Activated CD8-positive, alpha-beta T cell treated with anti-CD3 and anti-CD28 coated beads for 36 hours (primary cell): ENCODE measurements at regions of chr1 and their contacts with region 1.

Region 1: GRCh38 chr1:40338745-40339424 is 21.8 kb upstream of the COL9A2 start:
- DNase-seq: peak; percentile 96
- ATAC-seq: peak; percentile 92
- H3K4me3 Mint-ChIP-seq: no peak overlapping the region
- H3K27ac Mint-ChIP-seq: peak overlapping the region; percentile 9
- H3K4me1 Mint-ChIP-seq: peaks cover 41% of the 10 kb centered on the region
- H3K27me3 Mint-ChIP-seq: no peaks in the 10 kb centered on the region
- CTCF ChIP-seq: peak; percentile 96

Region 2: DNA sequence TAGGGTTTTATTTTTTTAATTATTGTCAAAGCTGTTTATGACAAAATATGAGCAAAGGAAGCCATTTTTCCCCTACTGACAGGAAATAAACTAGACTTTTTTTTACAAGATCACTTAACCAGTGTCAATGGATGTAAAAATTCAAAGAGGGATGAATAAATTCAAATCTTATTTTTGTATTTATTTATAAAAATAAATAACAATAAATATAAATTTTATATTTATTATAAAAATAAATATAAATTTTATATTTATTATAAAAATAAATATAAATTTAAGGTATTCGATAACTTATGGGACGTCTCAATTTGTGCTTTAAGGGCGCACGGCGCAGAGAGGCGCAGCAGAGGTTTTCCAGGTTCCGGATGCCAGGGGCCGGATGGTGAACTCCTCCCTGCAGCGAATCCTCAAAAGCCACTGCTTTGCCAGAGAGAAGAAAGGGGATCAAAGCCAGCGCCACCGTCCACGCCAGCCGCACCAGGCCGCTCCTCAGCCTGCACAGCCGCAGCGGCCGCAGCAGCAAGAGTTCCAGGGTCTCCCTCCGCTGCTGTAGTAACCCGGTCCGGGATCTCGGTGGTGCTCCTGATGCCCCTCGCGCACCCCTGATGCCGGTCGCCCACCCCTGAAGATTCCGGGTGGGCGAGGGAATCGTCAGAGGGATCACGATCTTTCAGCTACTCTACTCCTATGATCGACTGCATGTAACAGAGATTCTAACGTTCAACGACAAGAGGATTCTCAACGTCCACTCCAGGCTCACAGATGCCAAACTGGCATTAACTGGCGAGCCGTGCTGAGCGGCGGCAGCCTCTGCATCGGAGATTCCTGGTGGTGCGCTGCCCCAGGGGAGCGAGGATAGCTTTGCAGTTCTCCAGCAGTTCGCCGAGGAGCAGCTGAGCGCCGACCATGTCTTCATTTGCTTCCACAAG is 206.2 kb before region 1 on chr1:
- CTCF ChIA-PET with region 1: interaction called, 15 read pairs
- POLR2A ChIA-PET with region 1: no interaction called
- intact Hi-C with region 1: no loop called
- DNase-seq: no peak
- ATAC-seq: no peak
- H3K4me3 Mint-ChIP-seq: no peak overlapping the region
- H3K27ac Mint-ChIP-seq: no peak overlapping the region
- H3K4me1 Mint-ChIP-seq: no peaks in the 10 kb centered on the region
- H3K27me3 Mint-ChIP-seq: peaks cover 6% of the 10 kb centered on the region
- CTCF ChIP-seq: no peak

Region 3: DNA sequence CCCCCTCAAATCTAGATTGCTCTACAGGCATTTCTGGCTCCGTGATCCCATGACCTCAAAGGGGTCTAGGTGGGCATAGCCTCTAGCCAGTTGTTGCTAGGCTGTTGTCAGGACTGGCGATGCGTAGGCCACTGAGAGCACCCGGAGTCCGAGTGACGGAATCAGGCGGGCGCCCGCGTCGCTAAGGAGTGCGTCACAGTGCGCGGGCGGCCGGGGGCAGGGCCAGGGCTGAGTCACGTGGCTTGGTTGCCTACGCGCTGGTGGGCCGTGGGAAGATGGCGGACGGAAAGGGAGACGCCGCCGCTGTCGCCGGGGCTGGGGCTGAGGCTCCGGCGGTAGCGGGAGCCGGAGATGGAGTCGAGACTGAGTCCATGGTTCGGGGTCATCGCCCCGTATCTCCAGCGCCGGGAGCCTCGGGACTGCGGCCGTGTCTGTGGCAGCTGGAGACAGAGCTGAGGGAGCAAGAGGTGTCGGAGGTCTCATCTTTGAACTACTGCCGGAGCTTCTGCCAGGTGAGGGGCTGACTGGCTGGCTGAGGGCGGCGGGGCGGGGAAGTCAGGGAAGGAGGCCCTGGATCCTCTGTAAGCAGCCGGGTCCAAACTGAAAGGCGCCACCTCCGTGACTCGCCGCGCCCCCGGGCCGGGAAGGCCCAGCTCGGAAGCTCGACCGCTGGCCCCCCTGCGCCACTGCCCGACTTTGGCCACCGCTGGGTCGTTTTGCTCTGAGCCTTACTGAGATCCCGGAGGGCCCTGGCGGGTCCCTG is 177.6 kb before region 1 on chr1 and contains the start of gene RLF:
- CTCF ChIA-PET with region 1: interaction called, 331 read pairs
- POLR2A ChIA-PET with region 1: interaction called, 4 read pairs
- intact Hi-C with region 1: no loop called
- DNase-seq: peak; percentile 97
- ATAC-seq: peak; percentile 90
- H3K4me3 Mint-ChIP-seq: no peak within 1 kb of the TSS
- H3K27ac Mint-ChIP-seq: no peak within 1 kb of the TSS
- H3K4me1 Mint-ChIP-seq: peaks cover 5% of the 10 kb centered on the region
- H3K27me3 Mint-ChIP-seq: no peaks in the 10 kb centered on the region
- CTCF ChIP-seq: no peak
- total RNA-seq, gene RLF: 21.2 to 21.3 TPM

Region 4: GRCh38 chr1:40291293-40291692 is 47.6 kb before region 1 on chr1:
- CTCF ChIA-PET with region 1: interaction called, 14 read pairs
- POLR2A ChIA-PET with region 1: no interaction called
- intact Hi-C with region 1: no loop called
- DNase-seq: no peak
- ATAC-seq: no peak
- H3K4me3 Mint-ChIP-seq: no peak overlapping the region
- H3K27ac Mint-ChIP-seq: peak overlapping the region; percentile 68
- H3K4me1 Mint-ChIP-seq: peaks cover 7% of the 10 kb centered on the region
- H3K27me3 Mint-ChIP-seq: no peaks in the 10 kb centered on the region
- CTCF ChIP-seq: no peak

Region 5: GRCh38 chr1:40363721-40364120 is 24.8 kb after region 1 on chr1:
- CTCF ChIA-PET with region 1: interaction called, 26 read pairs
- POLR2A ChIA-PET with region 1: no interaction called
- intact Hi-C with region 1: no loop called
- DNase-seq: peak; percentile 68
- ATAC-seq: peak; percentile 99
- H3K4me3 Mint-ChIP-seq: no peak overlapping the region
- H3K27ac Mint-ChIP-seq: no peak overlapping the region
- H3K4me1 Mint-ChIP-seq: peaks cover 13% of the 10 kb centered on the region
- H3K27me3 Mint-ChIP-seq: no peaks in the 10 kb centered on the region
- CTCF ChIP-seq: peak; percentile 32

Region 6: GRCh38 chr1:40404670-40405462 is 66.0 kb after region 1 on chr1:
- CTCF ChIA-PET with region 1: interaction called, 56 read pairs
- POLR2A ChIA-PET with region 1: interaction called, 7 read pairs
- intact Hi-C with region 1: loop called (anchors 2 kb)
- DNase-seq: peak; percentile 61
- ATAC-seq: peak; percentile 31
- H3K4me3 Mint-ChIP-seq: peak overlapping the region; percentile 46
- H3K27ac Mint-ChIP-seq: peak overlapping the region; percentile 89
- H3K4me1 Mint-ChIP-seq: peaks cover 76% of the 10 kb centered on the region
- H3K27me3 Mint-ChIP-seq: no peaks in the 10 kb centered on the region
- CTCF ChIP-seq: peak; percentile 95

Region 7: DNA sequence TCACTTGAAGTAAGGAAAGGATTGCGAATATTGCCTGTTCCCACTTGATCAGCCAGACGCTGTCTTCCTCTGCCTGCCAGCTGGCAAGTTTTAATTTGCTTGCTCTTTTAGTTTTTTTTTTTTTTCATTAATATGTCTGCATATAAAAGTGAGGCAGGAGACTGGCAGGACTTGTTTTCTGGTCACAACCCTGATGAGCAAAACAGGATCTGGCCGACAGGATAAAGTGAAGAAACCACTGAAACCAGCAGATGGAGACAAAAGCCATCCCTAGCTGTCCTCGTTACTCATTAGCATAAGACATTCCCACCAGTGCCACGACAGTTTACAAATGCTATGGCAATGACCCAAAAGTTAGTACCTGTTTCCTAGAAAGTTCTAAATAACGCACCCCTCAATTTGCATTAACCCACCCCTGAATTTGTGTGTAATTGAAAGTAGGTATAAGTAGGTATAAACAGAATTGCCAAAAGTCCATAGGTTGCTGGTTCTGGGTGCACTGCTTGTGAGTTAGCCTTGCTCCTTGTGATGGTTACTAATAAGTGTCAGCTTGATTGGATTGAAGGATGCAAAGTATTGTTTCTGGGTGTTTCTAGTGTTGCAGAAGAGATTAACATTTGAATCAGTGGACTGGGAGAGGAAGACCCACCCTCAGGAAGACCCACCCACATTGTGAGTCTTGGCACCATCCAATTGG is 253.4 kb after region 1 on chr1:
- CTCF ChIA-PET with region 1: no interaction called
- POLR2A ChIA-PET with region 1: no interaction called
- intact Hi-C with region 1: no loop called
- DNase-seq: peak; percentile 33
- ATAC-seq: peak; percentile 64
- H3K4me3 Mint-ChIP-seq: no peak overlapping the region
- H3K27ac Mint-ChIP-seq: no peak overlapping the region
- H3K4me1 Mint-ChIP-seq: peaks cover 13% of the 10 kb centered on the region
- H3K27me3 Mint-ChIP-seq: peaks cover 3% of the 10 kb centered on the region
- CTCF ChIP-seq: peak; percentile 59